ENCODE measurements at regions of chr13 and their contacts with region 1.

Region 1: GRCh38 chr13:30617315-30618185 is at the start of gene USPL1:
- DNase-seq: peak; percentile 99
- ATAC-seq: peak; percentile 95 to 98 (median 96)
- H3K4me3 ChIP-seq: peak within 1 kb of the TSS; percentile 61 to 89 (median 84)
- H3K27ac ChIP-seq: peak within 1 kb of the TSS; percentile 98 to 100 (median 99)
- H3K4me1 ChIP-seq: peaks cover 0 to 42% (median 25%) of the 10 kb centered on the region in 12 donors
- H3K27me3 ChIP-seq: no peaks in the 10 kb centered on the region
- CTCF ChIP-seq: peak in 11 of 12 donors; percentile 14 to 48 (median 32)
- POLR2A ChIP-seq: peak; percentile 40 to 92
- total RNA-seq, gene USPL1: 9.0 to 14.3 (median 10.2) TPM

Region 2: DNA sequence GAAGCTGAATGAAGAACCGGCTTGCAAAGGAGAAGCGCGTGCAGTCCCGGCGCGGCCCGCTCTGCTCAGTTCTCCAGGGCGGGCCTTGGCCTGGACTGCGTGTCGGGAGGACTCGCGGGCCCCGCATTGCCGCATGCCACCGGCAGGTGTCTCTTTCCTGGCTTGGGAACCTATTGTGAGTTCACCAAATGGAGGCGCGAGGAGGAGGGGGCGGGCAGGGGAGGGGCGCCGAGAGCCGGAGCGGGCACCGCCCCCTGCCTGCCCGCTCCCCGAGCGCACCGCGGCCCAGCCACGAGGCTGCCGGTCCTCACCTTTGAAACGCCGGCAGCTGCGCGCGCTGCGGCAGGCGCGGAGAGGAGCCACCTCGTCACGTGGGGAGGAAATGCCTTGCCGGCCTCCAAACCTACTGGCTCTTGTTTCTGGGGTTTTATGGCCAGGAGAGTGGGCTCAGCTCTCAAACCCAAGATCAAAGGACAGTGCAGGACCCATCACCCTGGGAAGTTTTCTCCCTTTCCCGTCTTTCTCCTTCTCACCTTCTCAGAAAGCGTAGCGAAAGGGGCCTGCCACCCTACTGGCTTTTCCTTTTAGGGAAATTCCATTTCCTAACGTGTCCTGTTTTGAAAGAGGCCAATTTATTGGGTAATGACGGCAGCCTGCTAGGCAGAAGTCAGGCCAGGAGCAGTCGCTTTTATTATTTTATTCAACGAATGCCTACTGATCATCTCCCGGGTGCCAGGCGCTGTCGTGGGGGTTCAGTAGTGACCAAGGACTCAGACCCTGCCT is 209.0 kb before region 1 on chr13:
- intact Hi-C with region 1: loop called in 3 of 10 experiments (anchors 1 to 5 kb)
- DNase-seq: peak; percentile 92 to 97 (median 95)
- ATAC-seq: peak; percentile 93 to 98 (median 97)
- H3K4me3 ChIP-seq: peak overlapping the region in 11 of 12 donors; percentile 12 to 60 (median 49)
- H3K27ac ChIP-seq: peak overlapping the region; percentile 55 to 92 (median 80)
- H3K4me1 ChIP-seq: peaks cover 0 to 22% (median 8%) of the 10 kb centered on the region in 12 donors
- H3K27me3 ChIP-seq: no peaks in the 10 kb centered on the region
- CTCF ChIP-seq: peak; percentile 73 to 96 (median 81)
- POLR2A ChIP-seq: no peak

Region 3: GRCh38 chr13:30504081-30504480 is 113.5 kb before region 1 on chr13:
- intact Hi-C with region 1: no loop called
- DNase-seq: no peak
- ATAC-seq: no peak
- H3K4me3 ChIP-seq: no peak overlapping the region
- H3K27ac ChIP-seq: no peak overlapping the region
- H3K4me1 ChIP-seq: peaks cover 0 to 3% (median 0%) of the 10 kb centered on the region in 12 donors
- H3K27me3 ChIP-seq: no peaks in the 10 kb centered on the region
- CTCF ChIP-seq: no peak
- POLR2A ChIP-seq: no peak

Region 4: DNA sequence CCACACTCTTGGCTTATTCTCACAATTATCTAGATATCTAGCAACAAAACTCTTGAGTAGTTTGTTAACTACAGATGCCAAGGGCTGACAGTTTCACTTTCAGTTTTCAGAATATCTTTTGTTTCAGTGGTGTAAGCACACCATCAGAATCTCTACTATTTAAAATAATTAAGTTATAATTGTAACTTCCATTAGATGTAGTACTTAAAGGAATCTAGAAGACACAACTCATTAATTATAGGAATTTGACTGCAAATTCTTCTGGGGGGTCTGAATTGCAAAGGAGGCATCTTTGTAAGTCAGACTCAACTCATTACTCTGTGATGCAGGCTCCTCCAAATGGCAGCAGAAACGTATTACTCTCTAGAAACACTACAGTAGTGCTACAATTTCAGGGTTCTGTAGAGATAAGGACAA is 44.7 kb before region 1 on chr13:
- intact Hi-C with region 1: loop called in 5 of 10 experiments (anchors 2 to 5 kb)
- DNase-seq: peak in 1 of 5 donors; percentile 17
- ATAC-seq: peak in 3 of 4 donors; percentile 59 to 81 (median 62)
- H3K4me3 ChIP-seq: peak overlapping the region in 10 of 12 donors; percentile 28 to 56 (median 42)
- H3K27ac ChIP-seq: peak overlapping the region in 11 of 12 donors; percentile 1 to 82 (median 53)
- H3K4me1 ChIP-seq: peaks cover 0 to 57% (median 15%) of the 10 kb centered on the region in 12 donors
- H3K27me3 ChIP-seq: no peaks in the 10 kb centered on the region
- CTCF ChIP-seq: peak in 6 of 12 donors; percentile 35 to 52 (median 42)
- POLR2A ChIP-seq: no peak

Region 5: GRCh38 chr13:30679483-30680330 is 62.2 kb after region 1 on chr13:
- intact Hi-C with region 1: loop called in 3 of 10 experiments (anchors 1 to 10 kb)
- DNase-seq: peak in 1 of 5 donors; percentile 33
- ATAC-seq: peak; percentile 52 to 85 (median 74)
- H3K4me3 ChIP-seq: no peak overlapping the region
- H3K27ac ChIP-seq: no peak overlapping the region
- H3K4me1 ChIP-seq: peaks cover 0 to 19% (median 0%) of the 10 kb centered on the region in 12 donors
- H3K27me3 ChIP-seq: no peaks in the 10 kb centered on the region
- CTCF ChIP-seq: peak; percentile 34 to 68 (median 53)
- POLR2A ChIP-seq: no peak

Measured in heart left ventricle (tissue), 16 donors.